Activated naive CD8-positive, alpha-beta T cell treated with anti-CD3 and anti-CD28 coated beads, Interleukin-2, amount 10 ng/mL, durations not matched to agents 7 days and 5 days (primary cell): ENCODE measurements at regions of chr20 and their contacts with region 1.

Region 1: GRCh38 chr20:46363800-46364634 is 42.4 kb downstream of the ELMO2 start:
- DNase-seq: peak; percentile 93
- ATAC-seq: peak; percentile 75
- H3K4me3 Mint-ChIP-seq: peak overlapping the region; percentile 90
- H3K27ac Mint-ChIP-seq: peak overlapping the region; percentile 87
- H3K4me1 Mint-ChIP-seq: peaks cover 55% of the 10 kb centered on the region
- H3K27me3 Mint-ChIP-seq: no peaks in the 10 kb centered on the region

Region 2: DNA sequence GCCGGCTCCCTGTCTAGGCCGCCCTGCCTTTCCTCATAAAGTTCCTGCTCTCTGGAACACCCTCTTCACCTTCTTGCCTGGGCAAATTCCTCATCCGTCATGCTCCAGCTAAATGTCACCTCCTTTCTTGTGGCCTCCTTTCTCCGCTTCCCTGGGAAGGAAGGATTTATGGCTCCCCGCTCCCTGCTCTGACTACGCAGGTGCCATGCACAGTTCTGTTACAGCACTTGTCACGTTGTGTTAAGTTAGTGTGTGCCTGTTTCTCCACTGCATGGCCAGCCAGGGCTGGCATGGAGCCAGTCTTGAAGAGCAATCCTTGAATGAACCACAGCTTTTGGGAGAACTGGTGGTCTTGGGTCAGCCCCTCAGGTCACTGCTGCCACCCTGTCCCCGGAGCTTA is 184.2 kb before region 1 on chr20:
- POLR2A ChIA-PET with region 1: no interaction called
- DNase-seq: no peak
- ATAC-seq: no peak
- H3K4me3 Mint-ChIP-seq: no peak overlapping the region
- H3K27ac Mint-ChIP-seq: no peak overlapping the region
- H3K4me1 Mint-ChIP-seq: no peaks in the 10 kb centered on the region
- H3K27me3 Mint-ChIP-seq: peaks cover 16% of the 10 kb centered on the region

Region 3: DNA sequence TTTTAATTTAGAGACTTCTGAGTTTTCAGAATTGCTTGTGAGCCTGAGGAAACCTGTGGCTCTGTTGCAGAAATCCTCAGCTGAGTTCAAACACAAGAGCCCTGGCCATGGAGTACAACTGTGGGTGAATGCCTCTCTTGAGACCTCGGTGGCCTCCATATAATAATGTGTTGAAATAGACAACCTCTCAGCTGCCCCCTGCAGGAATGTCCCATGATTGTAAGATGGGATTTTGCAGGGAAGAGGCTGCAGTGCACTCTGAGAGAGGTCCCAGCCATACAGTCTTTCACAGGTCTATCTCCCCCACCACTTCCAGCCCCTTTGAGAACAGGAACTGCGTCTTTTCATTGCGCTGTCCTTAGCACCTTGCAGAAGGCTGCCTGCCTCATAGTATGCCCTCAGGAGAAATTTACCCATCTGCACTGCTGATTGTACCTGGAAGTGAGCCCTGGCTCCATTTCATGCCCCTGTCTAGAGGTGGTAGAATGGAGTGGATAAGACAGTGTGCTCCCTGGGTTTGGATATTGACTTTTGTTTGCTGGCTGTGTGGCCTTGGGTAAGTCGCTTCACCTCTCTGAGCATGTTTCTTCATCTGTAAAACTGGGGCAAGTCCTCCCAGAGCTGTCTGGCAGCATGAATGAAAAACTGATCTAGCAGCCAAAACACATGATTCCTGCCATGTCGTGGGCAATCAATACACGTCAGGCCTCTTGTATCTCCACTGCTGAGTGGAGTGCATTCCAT is 38.9 kb before region 1 on chr20:
- POLR2A ChIA-PET with region 1: no interaction called
- DNase-seq: no peak
- ATAC-seq: no peak
- H3K4me3 Mint-ChIP-seq: no peak overlapping the region
- H3K27ac Mint-ChIP-seq: no peak overlapping the region
- H3K4me1 Mint-ChIP-seq: no peaks in the 10 kb centered on the region
- H3K27me3 Mint-ChIP-seq: peaks cover 7% of the 10 kb centered on the region

Region 4: DNA sequence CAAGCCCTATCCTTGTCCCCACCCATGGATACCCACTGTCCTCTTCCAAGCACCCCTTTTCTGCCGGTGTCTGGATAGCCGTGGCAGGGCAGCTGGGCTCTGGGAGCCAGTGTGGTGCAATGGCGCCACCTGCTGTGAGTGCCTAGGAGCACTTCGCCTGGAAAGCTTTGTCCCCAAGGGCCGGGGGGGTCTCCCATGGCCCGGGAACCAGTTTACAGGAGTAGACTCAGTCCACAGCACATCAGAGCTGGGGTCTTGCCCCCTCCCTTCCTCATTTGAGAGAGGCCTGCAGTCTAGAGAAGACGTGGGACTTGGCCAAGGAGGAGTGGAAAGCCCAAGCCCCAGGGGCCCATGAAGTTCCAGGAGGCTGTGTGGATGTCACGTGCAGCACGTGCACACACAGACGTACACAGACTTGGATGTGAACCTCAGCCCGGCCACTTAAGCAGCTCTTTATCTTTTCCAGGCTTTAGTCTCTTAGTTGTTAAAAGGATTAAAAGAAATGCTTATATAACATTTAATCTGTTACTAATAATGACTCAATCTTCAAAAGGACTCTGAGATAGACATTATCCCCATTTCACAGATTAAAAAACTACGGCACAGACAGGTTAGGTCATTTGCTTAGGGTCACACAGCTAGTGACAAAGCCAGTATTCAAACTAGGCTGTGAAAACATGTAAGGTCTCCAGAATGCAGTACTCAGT is 14.8 kb before region 1 on chr20:
- POLR2A ChIA-PET with region 1: no interaction called
- DNase-seq: peak; percentile 75
- ATAC-seq: peak; percentile 39
- H3K4me3 Mint-ChIP-seq: no peak overlapping the region
- H3K27ac Mint-ChIP-seq: peak overlapping the region; percentile 34
- H3K4me1 Mint-ChIP-seq: peaks cover 18% of the 10 kb centered on the region
- H3K27me3 Mint-ChIP-seq: no peaks in the 10 kb centered on the region

Region 5: GRCh38 chr20:46400828-46401477 is 36.9 kb after region 1 on chr20:
- POLR2A ChIA-PET with region 1: interaction called, 74 read pairs
- DNase-seq: no peak
- ATAC-seq: peak; percentile 68
- H3K4me3 Mint-ChIP-seq: peak overlapping the region; percentile 85
- H3K27ac Mint-ChIP-seq: peak overlapping the region; percentile 95
- H3K4me1 Mint-ChIP-seq: peaks cover 60% of the 10 kb centered on the region
- H3K27me3 Mint-ChIP-seq: no peaks in the 10 kb centered on the region

Region 6: DNA sequence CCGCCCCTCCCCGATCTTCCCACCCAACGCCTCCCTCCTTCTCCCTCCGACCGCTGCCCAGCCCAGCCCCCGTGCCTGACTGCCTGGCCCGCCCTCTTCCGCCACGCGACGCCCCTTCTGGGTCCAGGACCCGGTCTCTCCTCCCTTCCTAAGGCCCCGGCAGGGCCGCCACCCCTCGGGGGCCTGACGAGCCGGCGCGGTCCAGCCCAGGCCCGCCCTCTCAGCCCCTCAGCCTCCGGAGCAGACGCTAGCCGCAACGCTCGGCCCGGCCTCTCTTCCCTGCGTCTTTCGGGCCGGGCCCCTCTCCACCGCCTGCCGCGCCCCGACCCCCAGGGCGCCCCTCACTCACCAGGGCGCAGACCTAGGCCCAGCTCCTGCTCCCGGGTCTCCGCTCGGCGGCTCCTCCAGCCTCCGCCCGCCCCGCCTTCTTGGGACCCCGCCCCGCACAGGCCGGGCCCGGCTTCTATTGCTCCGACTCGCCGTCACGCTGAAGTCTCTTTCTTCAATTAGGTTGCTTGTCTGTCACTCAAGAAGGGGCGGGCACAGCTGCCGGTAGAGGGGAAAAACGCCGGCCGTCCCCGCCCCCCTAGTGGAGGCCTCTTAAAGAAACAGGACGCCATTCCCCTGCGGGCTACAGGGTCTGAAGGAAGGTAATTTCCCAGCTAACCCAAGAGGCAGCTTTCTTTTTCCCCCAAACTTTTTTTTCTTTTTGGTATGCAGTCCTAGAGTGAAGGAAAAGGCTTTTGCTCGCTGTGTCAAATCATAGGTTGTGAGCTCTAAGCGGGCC is 42.4 kb after region 1 on chr20 and contains the start of gene ELMO2:
- POLR2A ChIA-PET with region 1: interaction called, 74 read pairs
- DNase-seq: peak; percentile 92
- ATAC-seq: peak; percentile 86
- H3K4me3 Mint-ChIP-seq: peak within 1 kb of the TSS; percentile 94
- H3K27ac Mint-ChIP-seq: peak within 1 kb of the TSS; percentile 94
- H3K4me1 Mint-ChIP-seq: peaks cover 62% of the 10 kb centered on the region
- H3K27me3 Mint-ChIP-seq: no peaks in the 10 kb centered on the region
- total RNA-seq, gene ELMO2: 66.8 to 75.2 TPM